ENCODE measurements at regions of chr16 and their contacts with region 1.

Region 1: GRCh38 chr16:56625140-56625942 is at the start of gene MT1E:
- DNase-seq: peak; percentile 77
- ATAC-seq: peak; percentile 86
- H3K4me3 ChIP-seq: peak within 1 kb of the TSS; percentile 66 to 72
- H3K27ac ChIP-seq: peak within 1 kb of the TSS; percentile 97
- H3K4me1 ChIP-seq: peaks cover 12 to 43% of the 10 kb centered on the region in 2 experiments
- H3K27me3 ChIP-seq: no peaks in the 10 kb centered on the region
- CTCF ChIP-seq: no peak
- POLR2A ChIP-seq: peak; percentile 98
- RAD21 ChIP-seq: no peak
- total RNA-seq, gene MT1E: 383 TPM

Region 2: DNA sequence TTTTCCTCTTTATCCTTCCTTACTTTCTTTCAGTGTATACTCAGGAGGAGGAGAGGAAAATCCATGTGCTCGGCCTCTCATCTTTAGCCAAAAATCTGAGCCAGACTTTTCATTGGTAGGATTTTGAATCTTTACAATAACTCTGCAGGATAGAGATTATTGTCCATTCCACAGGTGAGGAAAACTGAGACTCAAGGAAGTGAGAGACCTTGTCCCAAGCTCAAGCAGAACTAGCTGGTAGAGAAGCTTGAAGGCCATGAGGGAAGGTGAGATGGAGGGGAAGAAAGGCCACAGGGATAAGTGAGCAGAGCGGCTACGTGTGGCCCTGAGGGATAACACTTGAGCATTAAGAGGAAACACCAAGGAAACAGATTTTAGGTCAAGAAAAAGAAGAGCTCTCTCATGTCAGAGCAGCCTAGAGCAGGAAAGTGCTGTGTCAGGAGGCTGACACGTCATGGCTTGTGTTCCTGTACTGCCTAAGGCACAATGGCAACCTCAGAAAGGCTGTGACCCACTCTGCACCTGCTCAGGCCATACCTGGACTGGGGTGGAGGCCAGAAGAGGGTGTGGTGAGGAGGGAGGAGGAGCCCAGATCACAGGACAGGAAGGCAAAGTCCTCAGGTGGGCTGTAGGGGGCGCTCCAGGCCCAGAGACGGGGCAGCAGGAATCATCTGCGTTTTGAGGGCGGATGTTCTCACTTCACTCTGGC is 48.6 kb before region 1 on chr16:
- CTCF ChIA-PET with region 1: no interaction called
- POLR2A ChIA-PET with region 1: no interaction called
- RAD21 ChIA-PET with region 1: interaction called in 1 of 2 experiments, 3 read pairs
- intact Hi-C with region 1: loop called (anchors 2 kb)
- DNase-seq: peak; percentile 72
- ATAC-seq: peak; percentile 100
- H3K4me3 ChIP-seq: no peak overlapping the region
- H3K27ac ChIP-seq: no peak overlapping the region
- H3K4me1 ChIP-seq: peaks cover 0 to 9% of the 10 kb centered on the region in 2 experiments; a peak in 2 of 4 replicates
- H3K27me3 ChIP-seq: no peaks in the 10 kb centered on the region
- CTCF ChIP-seq: peak; percentile 89 to 97 (median 93); a peak in 5 of 6 replicates
- POLR2A ChIP-seq: no peak
- RAD21 ChIP-seq: peak; percentile 98

Region 3: GRCh38 chr16:56608043-56608875 is 17.1 kb before region 1 on chr16 and contains the start of gene MT2A:
- CTCF ChIA-PET with region 1: interaction called, 4 read pairs
- POLR2A ChIA-PET with region 1: interaction called, 344 read pairs
- RAD21 ChIA-PET with region 1: interaction called, 4 to 7 read pairs
- intact Hi-C with region 1: loop called (anchors 1 kb)
- DNase-seq: peak; percentile 95
- ATAC-seq: peak; percentile 71
- H3K4me3 ChIP-seq: peak within 1 kb of the TSS; percentile 63 to 85
- H3K27ac ChIP-seq: peak within 1 kb of the TSS; percentile 96
- H3K4me1 ChIP-seq: peaks cover 64 to 86% of the 10 kb centered on the region in 2 experiments
- H3K27me3 ChIP-seq: no peaks in the 10 kb centered on the region
- CTCF ChIP-seq: no peak
- POLR2A ChIP-seq: peak; percentile 95
- RAD21 ChIP-seq: no peak
- total RNA-seq, gene MT2A: 710 TPM

Region 4: GRCh38 chr16:56657555-56658326 is 32.4 kb after region 1 on chr16 and contains the start of gene MT1F:
- CTCF ChIA-PET with region 1: no interaction called
- POLR2A ChIA-PET with region 1: interaction called, 17 read pairs
- RAD21 ChIA-PET with region 1: no interaction called
- intact Hi-C with region 1: no loop called
- DNase-seq: peak; percentile 83
- ATAC-seq: peak; percentile 87
- H3K4me3 ChIP-seq: peak within 1 kb of the TSS; percentile 47 to 55
- H3K27ac ChIP-seq: no peak within 1 kb of the TSS; the same call in 1 of the 2 replicates
- H3K4me1 ChIP-seq: peaks cover 26 to 54% of the 10 kb centered on the region in 2 experiments
- H3K27me3 ChIP-seq: no peaks in the 10 kb centered on the region
- CTCF ChIP-seq: no peak
- POLR2A ChIP-seq: no peak
- RAD21 ChIP-seq: peak; percentile 37
- total RNA-seq, gene MT1F: 7.3 TPM

Region 5: GRCh38 chr16:56700195-56700594 is 74.9 kb after region 1 on chr16:
- CTCF ChIA-PET with region 1: interaction called, 7 read pairs
- POLR2A ChIA-PET with region 1: interaction called, 24 read pairs
- RAD21 ChIA-PET with region 1: interaction called, 3 to 4 read pairs
- intact Hi-C with region 1: no loop called
- DNase-seq: no peak
- ATAC-seq: no peak
- H3K4me3 ChIP-seq: no peak overlapping the region
- H3K27ac ChIP-seq: no peak overlapping the region
- H3K4me1 ChIP-seq: peaks cover 0 to 11% of the 10 kb centered on the region in 2 experiments; a peak in 3 of 4 replicates
- H3K27me3 ChIP-seq: no peaks in the 10 kb centered on the region
- CTCF ChIP-seq: no peak
- POLR2A ChIP-seq: no peak
- RAD21 ChIP-seq: no peak